ENCODE measurements at regions of chr2 and their contacts with region 1.

Region 1: GRCh38 chr2:88739985-88740600 is 48.6 kb downstream of the RPIA start:
- DNase-seq: peak; percentile 85
- H3K4me3 ChIP-seq: no peak overlapping the region
- H3K27ac ChIP-seq: no peak overlapping the region
- H3K4me1 ChIP-seq: peaks cover 0 to 20% (median 5%) of the 10 kb centered on the region in 6 donors
- H3K27me3 ChIP-seq: no peaks in the 10 kb centered on the region
- CTCF ChIP-seq: peak; percentile 72 to 96 (median 90)
- POLR2A ChIP-seq: no peak

Region 2: DNA sequence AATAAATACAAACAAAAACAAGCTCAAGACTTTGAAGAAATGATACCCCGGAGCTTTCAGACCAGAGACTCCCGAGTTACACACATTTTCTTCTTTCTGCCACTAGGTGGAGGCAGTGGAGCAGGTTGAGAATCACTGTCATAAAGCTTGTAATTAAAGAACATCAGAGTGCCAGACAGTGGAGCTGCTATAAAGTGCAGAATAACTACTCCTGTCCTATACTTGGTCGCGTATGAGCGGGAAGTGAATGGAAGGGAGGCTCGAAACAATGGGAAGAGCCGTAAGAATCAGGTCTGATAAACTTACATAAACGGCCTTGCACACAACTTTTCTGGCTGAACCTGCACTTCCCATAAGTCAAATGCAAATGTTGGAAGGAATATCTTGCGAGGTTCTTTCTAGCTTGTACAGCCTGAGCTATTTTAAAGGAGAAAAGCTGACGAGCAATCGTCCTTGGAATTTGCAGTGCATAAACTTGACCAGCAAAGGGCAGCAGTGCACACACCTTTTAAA is 140.4 kb after region 1 on chr2:
- intact Hi-C with region 1: loop called (anchors 10 kb)
- DNase-seq: no peak
- H3K4me3 ChIP-seq: peak overlapping the region in 1 of 8 donors; percentile 47
- H3K27ac ChIP-seq: peak overlapping the region in 4 of 8 donors; percentile 3 to 63 (median 34)
- H3K4me1 ChIP-seq: peaks cover 0 to 21% (median 6%) of the 10 kb centered on the region in 6 donors
- H3K27me3 ChIP-seq: no peaks in the 10 kb centered on the region
- CTCF ChIP-seq: peak; percentile 34 to 74 (median 62)
- POLR2A ChIP-seq: no peak

Region 3: DNA sequence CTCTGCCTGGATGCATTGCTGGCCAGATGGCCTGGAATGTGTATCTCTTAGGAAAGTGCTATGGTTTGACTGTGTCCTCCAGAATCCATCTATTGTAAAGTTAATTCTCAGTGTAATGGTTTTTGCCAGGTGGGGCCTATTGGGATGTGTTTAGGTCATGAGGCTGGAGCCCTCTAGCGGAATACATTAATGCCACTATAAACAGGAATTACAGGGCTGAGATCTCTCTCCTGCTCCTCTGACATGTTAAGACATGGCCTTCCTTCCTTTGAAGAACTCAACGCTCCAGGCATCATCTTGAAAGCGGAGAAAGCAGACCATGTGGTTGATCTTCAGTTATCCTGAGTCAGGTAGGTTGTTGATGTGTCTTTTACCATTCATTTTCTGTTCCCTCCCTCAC is 227.8 kb after region 1 on chr2:
- intact Hi-C with region 1: no loop called
- DNase-seq: no peak
- H3K4me3 ChIP-seq: no peak overlapping the region
- H3K27ac ChIP-seq: no peak overlapping the region
- H3K4me1 ChIP-seq: no peaks in the 10 kb centered on the region
- H3K27me3 ChIP-seq: no peaks in the 10 kb centered on the region
- CTCF ChIP-seq: no peak
- POLR2A ChIP-seq: no peak